ENCODE measurements at regions of chr1 and their contacts with region 1.

Region 1: DNA sequence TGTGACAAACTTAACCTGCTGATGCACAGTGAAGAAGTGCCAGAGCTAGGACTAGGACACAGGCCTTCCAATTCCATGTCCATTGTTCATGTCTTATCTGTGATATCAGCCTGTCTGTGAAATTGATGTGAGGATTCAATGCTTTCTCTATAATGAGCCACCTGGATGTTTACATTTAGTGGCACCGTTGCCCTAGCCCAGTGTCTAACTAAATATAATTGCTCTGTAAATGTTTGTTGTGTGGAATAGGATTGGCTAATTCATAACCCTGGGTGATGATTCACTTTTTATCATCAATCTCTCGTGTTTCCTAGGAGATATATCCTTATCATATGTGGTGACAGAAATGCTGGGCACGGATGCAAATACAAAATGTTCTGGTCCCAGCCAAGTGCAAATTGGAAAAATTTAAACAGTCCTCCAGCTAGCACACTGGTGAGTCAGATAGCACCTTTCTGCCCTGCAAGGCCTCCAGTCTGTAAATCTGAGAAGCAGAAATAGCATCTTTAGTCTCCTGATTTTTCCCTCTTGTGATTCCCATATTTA is 46.9 kb upstream of the GNG12 start:
- DNase-seq: peak; percentile 89
- ATAC-seq: peak; percentile 84
- H3K4me3 ChIP-seq: no peak overlapping the region
- H3K27ac ChIP-seq: peak overlapping the region; percentile 72
- H3K4me1 ChIP-seq: peaks cover 32% of the 10 kb centered on the region
- H3K27me3 ChIP-seq: no peaks in the 10 kb centered on the region
- CTCF ChIP-seq: no peak

Region 2: GRCh38 chr1:67514300-67514699 is 365.8 kb before region 1 on chr1:
- CTCF ChIA-PET with region 1: no interaction called
- POLR2A ChIA-PET with region 1: no interaction called
- intact Hi-C with region 1: no loop called
- DNase-seq: no peak
- ATAC-seq: no peak
- H3K4me3 ChIP-seq: no peak overlapping the region
- H3K27ac ChIP-seq: no peak overlapping the region
- H3K4me1 ChIP-seq: no peaks in the 10 kb centered on the region
- H3K27me3 ChIP-seq: no peaks in the 10 kb centered on the region
- CTCF ChIP-seq: no peak

Region 3: DNA sequence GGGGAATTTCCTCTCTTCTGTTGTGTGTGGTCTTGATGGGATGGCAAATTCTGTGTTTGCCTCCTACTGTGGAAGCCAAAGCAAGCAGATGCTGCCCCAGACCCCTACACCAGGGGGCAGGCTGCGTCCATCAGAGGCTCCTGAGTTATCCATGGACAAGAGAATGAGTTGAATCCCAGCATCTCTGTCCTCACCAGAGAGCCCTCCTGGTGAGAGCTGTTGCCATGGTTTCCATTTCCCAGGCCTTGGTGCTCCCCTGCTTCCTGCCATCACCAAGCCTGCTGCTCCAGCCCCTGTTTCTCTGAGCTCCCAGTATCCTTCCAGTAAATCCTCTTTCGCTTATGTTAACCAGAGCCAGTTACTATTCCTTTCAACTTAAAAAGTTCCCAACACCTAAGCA is 26.4 kb before region 1 on chr1:
- CTCF ChIA-PET with region 1: no interaction called
- POLR2A ChIA-PET with region 1: no interaction called
- intact Hi-C with region 1: no loop called
- DNase-seq: peak; percentile 85
- ATAC-seq: peak; percentile 66
- H3K4me3 ChIP-seq: no peak overlapping the region
- H3K27ac ChIP-seq: no peak overlapping the region
- H3K4me1 ChIP-seq: peaks cover 17% of the 10 kb centered on the region
- H3K27me3 ChIP-seq: no peaks in the 10 kb centered on the region
- CTCF ChIP-seq: peak; percentile 97

Region 4: GRCh38 chr1:67908250-67908936 is 28.3 kb after region 1 on chr1:
- CTCF ChIA-PET with region 1: no interaction called
- POLR2A ChIA-PET with region 1: no interaction called
- intact Hi-C with region 1: loop called (anchors 2 kb)
- DNase-seq: peak; percentile 82
- ATAC-seq: peak; percentile 93
- H3K4me3 ChIP-seq: peak overlapping the region; percentile 4; the same call in 1 of the 2 replicates
- H3K27ac ChIP-seq: peak overlapping the region; percentile 92
- H3K4me1 ChIP-seq: peaks cover 24% of the 10 kb centered on the region
- H3K27me3 ChIP-seq: no peaks in the 10 kb centered on the region
- CTCF ChIP-seq: no peak

Region 5: GRCh38 chr1:67978890-67979516 is 98.9 kb after region 1 on chr1:
- CTCF ChIA-PET with region 1: interaction called, 3 read pairs
- POLR2A ChIA-PET with region 1: no interaction called
- intact Hi-C with region 1: loop called (anchors 5 kb)
- DNase-seq: peak; percentile 87
- ATAC-seq: peak; percentile 97
- H3K4me3 ChIP-seq: no peak overlapping the region
- H3K27ac ChIP-seq: peak overlapping the region; percentile 60
- H3K4me1 ChIP-seq: peaks cover 18% of the 10 kb centered on the region
- H3K27me3 ChIP-seq: no peaks in the 10 kb centered on the region
- CTCF ChIP-seq: no peak